ENCODE measurements at regions of chr11 and their contacts with region 1.

Region 1: DNA sequence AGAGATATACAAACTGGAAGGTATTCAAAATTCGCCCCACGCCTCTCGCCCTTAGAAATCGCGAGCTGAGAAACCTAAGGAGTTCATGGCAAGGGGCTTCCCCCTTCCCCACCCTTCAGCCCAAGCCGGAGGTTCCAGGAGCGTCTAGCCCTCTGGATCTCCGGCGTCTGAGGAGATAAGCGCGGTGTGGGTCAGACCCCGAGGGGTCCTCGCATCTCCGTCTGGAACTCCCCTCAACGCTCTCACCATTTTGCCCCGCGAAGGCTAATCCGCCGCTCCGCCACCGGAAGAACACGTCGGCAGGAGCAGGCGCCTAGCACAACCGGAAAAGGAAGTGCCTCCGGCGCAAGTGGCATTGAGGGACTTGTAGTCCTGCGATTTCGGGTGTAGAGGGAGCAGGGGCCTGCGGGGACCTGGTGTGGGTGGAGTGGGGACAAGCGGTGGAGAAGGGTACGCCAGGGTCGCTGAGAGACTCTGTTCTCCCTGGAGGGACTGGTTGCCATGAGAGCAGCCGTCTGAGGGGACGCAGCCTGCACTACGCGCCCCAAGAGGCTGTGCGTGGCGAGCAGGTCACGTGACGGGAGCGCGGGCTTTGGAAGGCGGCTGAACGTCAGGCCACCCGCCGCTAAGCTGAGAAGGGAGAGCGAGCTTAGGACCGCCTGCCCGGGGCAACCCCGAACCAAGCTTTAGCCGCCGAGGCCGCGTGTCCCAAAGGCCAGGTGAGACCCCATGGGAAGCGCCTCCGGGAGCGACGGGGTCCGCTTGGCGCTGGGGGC is at the starts of genes FEN1 and TMEM258:
- DNase-seq: peak; percentile 94
- ATAC-seq: peak; percentile 87
- H3K4me3 ChIP-seq: peak within 1 kb of the TSS; percentile 74
- H3K27ac ChIP-seq: peak within 1 kb of the TSS; percentile 98
- H3K4me1 ChIP-seq: peaks cover 3% of the 10 kb centered on the region
- H3K27me3 ChIP-seq: no peaks in the 10 kb centered on the region
- CTCF ChIP-seq: 0 out of 2 replicates have a peak, but pooled peaks have one; percentile 2
- POLR2A ChIP-seq: peak; percentile 95
- RAD21 ChIP-seq: no peak
- total RNA-seq, gene FEN1: 41.9 and 43.9 TPM in 2 replicates
- total RNA-seq, gene TMEM258: 70.0 and 107 TPM in 2 replicates

Region 2: GRCh38 chr11:61627567-61628445 is 164.7 kb before region 1 on chr11:
- CTCF ChIA-PET with region 1: no interaction called
- POLR2A ChIA-PET with region 1: no interaction called
- dilution Hi-C with region 1: no loop called
- in situ Hi-C with region 1: no loop called
- intact Hi-C with region 1: no loop called
- DNase-seq: peak; percentile 73
- ATAC-seq: peak; percentile 97
- H3K4me3 ChIP-seq: no peak overlapping the region
- H3K27ac ChIP-seq: no peak overlapping the region
- H3K4me1 ChIP-seq: no peaks in the 10 kb centered on the region
- H3K27me3 ChIP-seq: peaks cover 11% of the 10 kb centered on the region
- CTCF ChIP-seq: peak; percentile 92
- POLR2A ChIP-seq: 0 out of 2 replicates have a peak, but pooled peaks have one; percentile 32
- RAD21 ChIP-seq: peak; percentile 94

Region 3: GRCh38 chr11:61827571-61828378 is 35.3 kb after region 1 on chr11 and contains the start of gene FADS2:
- CTCF ChIA-PET with region 1: no interaction called
- POLR2A ChIA-PET with region 1: no interaction called
- dilution Hi-C with region 1: no loop called
- in situ Hi-C with region 1: no loop called
- intact Hi-C with region 1: loop called (anchors 2 kb)
- DNase-seq: peak; percentile 89
- ATAC-seq: peak; percentile 88
- H3K4me3 ChIP-seq: peak within 1 kb of the TSS; percentile 72
- H3K27ac ChIP-seq: peak within 1 kb of the TSS; percentile 50
- H3K4me1 ChIP-seq: peaks cover 11% of the 10 kb centered on the region; the same call in 1 of the 2 replicates
- H3K27me3 ChIP-seq: no peaks in the 10 kb centered on the region
- CTCF ChIP-seq: no peak
- POLR2A ChIP-seq: peak; percentile 70
- RAD21 ChIP-seq: no peak
- total RNA-seq, gene FADS2: 31.9 and 33.3 TPM in 2 replicates

Region 4: GRCh38 chr11:61891331-61892084 is 99.0 kb after region 1 on chr11 and contains the start of gene FADS3:
- CTCF ChIA-PET with region 1: interaction called, 4 read pairs
- POLR2A ChIA-PET with region 1: no interaction called
- dilution Hi-C with region 1: no loop called
- in situ Hi-C with region 1: no loop called
- intact Hi-C with region 1: loop called (anchors 2 kb)
- DNase-seq: peak; percentile 69
- ATAC-seq: peak; percentile 93
- H3K4me3 ChIP-seq: peak within 1 kb of the TSS; percentile 63
- H3K27ac ChIP-seq: peak within 1 kb of the TSS; percentile 35; the same call in 1 of the 2 replicates
- H3K4me1 ChIP-seq: peaks cover 26% of the 10 kb centered on the region
- H3K27me3 ChIP-seq: no peaks in the 10 kb centered on the region
- CTCF ChIP-seq: no peak
- POLR2A ChIP-seq: peak; percentile 83
- RAD21 ChIP-seq: no peak
- total RNA-seq, gene FADS3: 38.0 and 54.5 TPM in 2 replicates

Region 5: DNA sequence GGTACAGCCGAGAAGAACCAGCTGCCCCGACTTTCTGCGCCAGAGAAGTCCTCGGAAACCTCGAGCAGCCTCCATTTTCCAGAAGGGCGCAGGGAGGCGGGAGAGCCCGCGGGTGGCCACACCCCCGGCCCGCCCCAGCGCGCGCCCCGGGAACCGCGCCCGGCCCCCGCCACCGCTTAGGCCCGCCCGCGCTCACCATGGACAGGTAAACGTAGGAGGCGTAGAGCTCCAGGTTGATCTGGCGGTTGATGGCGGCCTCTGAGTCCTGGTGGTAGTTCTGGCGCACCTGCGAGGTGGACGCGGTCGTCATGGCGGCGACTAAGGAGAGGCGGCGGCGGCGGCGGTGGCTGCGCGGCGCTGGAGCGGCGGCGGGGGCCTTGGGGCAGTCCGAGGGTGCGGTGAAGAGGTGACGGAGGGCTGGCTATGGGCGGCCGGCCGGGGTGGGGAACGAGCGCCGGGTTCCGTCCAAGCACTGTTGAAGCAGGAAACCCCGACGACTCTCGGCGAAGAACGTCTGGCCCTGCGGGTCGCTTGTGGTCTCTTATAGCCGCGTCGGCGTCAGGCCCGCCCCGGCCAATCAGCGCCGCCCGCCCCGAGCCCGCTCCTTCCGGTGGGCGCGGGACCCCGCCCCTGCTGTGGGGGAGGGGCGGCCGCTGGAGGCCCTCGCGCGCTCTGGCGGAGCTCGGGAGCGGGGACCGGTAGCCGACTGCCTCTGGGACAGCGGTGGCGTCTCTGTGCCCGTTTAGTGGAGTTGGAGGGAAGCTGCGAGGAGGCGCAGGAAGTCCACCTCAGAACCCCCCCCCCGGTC is 174.8 kb after region 1 on chr11 and contains the start of gene FTH1:
- CTCF ChIA-PET with region 1: interaction called, 3 read pairs
- POLR2A ChIA-PET with region 1: no interaction called
- dilution Hi-C with region 1: no loop called
- in situ Hi-C with region 1: no loop called
- intact Hi-C with region 1: loop called (anchors 1 kb)
- DNase-seq: peak; percentile 88
- ATAC-seq: peak; percentile 70
- H3K4me3 ChIP-seq: peak within 1 kb of the TSS; percentile 93
- H3K27ac ChIP-seq: peak within 1 kb of the TSS; percentile 96
- H3K4me1 ChIP-seq: peaks cover 19% of the 10 kb centered on the region
- H3K27me3 ChIP-seq: no peaks in the 10 kb centered on the region
- CTCF ChIP-seq: no peak
- POLR2A ChIP-seq: peak; percentile 98
- RAD21 ChIP-seq: no peak
- total RNA-seq, gene FTH1: 344 and 385 TPM in 2 replicates

Region 6: GRCh38 chr11:62044639-62045121 is 252.2 kb after region 1 on chr11:
- CTCF ChIA-PET with region 1: no interaction called
- POLR2A ChIA-PET with region 1: no interaction called
- dilution Hi-C with region 1: no loop called
- in situ Hi-C with region 1: no loop called
- intact Hi-C with region 1: no loop called
- DNase-seq: no peak
- ATAC-seq: no peak
- H3K4me3 ChIP-seq: no peak overlapping the region
- H3K27ac ChIP-seq: no peak overlapping the region
- H3K4me1 ChIP-seq: no peaks in the 10 kb centered on the region
- H3K27me3 ChIP-seq: peaks cover 8% of the 10 kb centered on the region
- CTCF ChIP-seq: no peak
- POLR2A ChIP-seq: no peak
- RAD21 ChIP-seq: no peak

Region 7: DNA sequence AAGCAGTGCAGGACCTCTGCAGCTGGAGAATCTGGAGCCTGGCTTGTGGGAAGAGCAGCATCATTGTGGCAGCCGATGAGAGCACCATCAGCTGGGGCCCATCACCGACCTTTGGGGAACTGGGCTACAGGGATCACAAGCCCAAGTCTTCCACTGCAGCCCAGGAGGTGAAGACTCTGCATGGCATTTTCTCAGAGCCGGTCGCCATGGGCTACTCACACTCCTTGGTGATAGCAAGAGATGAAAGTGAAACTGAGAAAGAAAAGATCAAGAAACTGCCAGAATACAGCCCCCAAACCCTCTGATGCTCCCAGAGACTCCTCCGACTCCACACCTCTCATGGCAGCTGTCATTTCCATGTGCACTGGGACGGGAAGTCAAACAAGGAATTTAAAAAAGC is 580.4 kb after region 1 on chr11:
- CTCF ChIA-PET with region 1: no interaction called
- POLR2A ChIA-PET with region 1: no interaction called
- dilution Hi-C with region 1: no loop called
- in situ Hi-C with region 1: no loop called
- intact Hi-C with region 1: loop called (anchors 2 kb)
- DNase-seq: no peak
- ATAC-seq: no peak
- H3K4me3 ChIP-seq: no peak overlapping the region
- H3K27ac ChIP-seq: no peak overlapping the region
- H3K4me1 ChIP-seq: no peaks in the 10 kb centered on the region
- H3K27me3 ChIP-seq: peaks cover 14% of the 10 kb centered on the region
- CTCF ChIP-seq: no peak
- POLR2A ChIP-seq: no peak
- RAD21 ChIP-seq: no peak

Measured in IMR-90 (cell line).